BJ (cell line): ENCODE measurements at regions of chr2 and their contacts with region 1.

Region 1: DNA sequence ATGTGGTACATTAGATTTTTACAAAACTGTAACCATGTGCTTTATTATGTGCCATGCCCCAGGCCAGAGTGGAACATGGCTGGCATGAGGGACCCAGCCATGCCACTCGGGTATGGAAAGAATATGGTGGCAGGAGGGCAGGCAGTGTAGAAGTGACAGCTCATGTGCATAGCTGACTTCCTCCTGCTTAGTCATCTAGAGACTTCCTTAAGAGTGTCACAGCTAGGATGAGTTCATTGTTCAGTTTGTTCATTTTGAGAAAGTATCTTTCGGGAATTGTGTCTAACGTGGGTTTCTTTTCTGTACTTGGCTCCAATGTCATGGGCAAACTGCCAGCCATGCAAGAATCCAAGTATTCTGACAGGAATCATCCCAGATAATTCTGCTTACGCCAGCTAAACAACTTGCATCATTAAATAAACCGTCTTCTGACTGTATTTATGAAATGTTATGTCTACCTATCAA is 94.3 kb upstream of the ITGB6 start:
- DNase-seq: no peak
- H3K4me3 ChIP-seq: no peak overlapping the region
- H3K27me3 ChIP-seq: no peaks in the 10 kb centered on the region
- CTCF ChIP-seq: no peak

Region 2: GRCh38 chr2:160498137-160498536 is 203.8 kb after region 1 on chr2:
- CTCF ChIA-PET with region 1: interaction called, 3 read pairs
- POLR2A ChIA-PET with region 1: interaction called, 14 read pairs
- DNase-seq: no peak
- H3K4me3 ChIP-seq: no peak overlapping the region
- H3K27me3 ChIP-seq: no peaks in the 10 kb centered on the region
- CTCF ChIP-seq: no peak